Activated B cell treated with CpG ODN at 0.5 μM for 24 hours (primary cell): ENCODE measurements at regions of chr2 and their contacts with region 1.

Region 1: GRCh38 chr2:38115216-38116032 is 39.5 kb upstream of the CYP1B1 start:
- DNase-seq: peak; percentile 56
- ATAC-seq: peak; percentile 77
- H3K4me3 Mint-ChIP-seq: no peak overlapping the region
- H3K27ac Mint-ChIP-seq: no peak overlapping the region
- H3K4me1 Mint-ChIP-seq: peaks cover 3% of the 10 kb centered on the region
- H3K27me3 Mint-ChIP-seq: peaks cover 31% of the 10 kb centered on the region
- CTCF ChIP-seq: peak; percentile 69

Region 2: GRCh38 chr2:37397166-37397565 is 718.3 kb before region 1 on chr2:
- CTCF ChIA-PET with region 1: interaction called, 3 read pairs
- POLR2A ChIA-PET with region 1: no interaction called
- intact Hi-C with region 1: loop called (anchors 2 kb)
- DNase-seq: no peak
- ATAC-seq: no peak
- H3K4me3 Mint-ChIP-seq: no peak overlapping the region
- H3K27ac Mint-ChIP-seq: no peak overlapping the region
- H3K4me1 Mint-ChIP-seq: peaks cover 4% of the 10 kb centered on the region
- H3K27me3 Mint-ChIP-seq: no peaks in the 10 kb centered on the region
- CTCF ChIP-seq: no peak

Region 3: GRCh38 chr2:37925063-37925897 is 190.1 kb before region 1 on chr2 and contains the start of gene RMDN2:
- CTCF ChIA-PET with region 1: no interaction called
- POLR2A ChIA-PET with region 1: no interaction called
- intact Hi-C with region 1: loop called (anchors 1 kb)
- DNase-seq: peak; percentile 86
- ATAC-seq: peak; percentile 91
- H3K4me3 Mint-ChIP-seq: peak within 1 kb of the TSS; percentile 96
- H3K27ac Mint-ChIP-seq: peak within 1 kb of the TSS; percentile 93
- H3K4me1 Mint-ChIP-seq: peaks cover 28% of the 10 kb centered on the region
- H3K27me3 Mint-ChIP-seq: no peaks in the 10 kb centered on the region
- CTCF ChIP-seq: no peak
- total RNA-seq, gene RMDN2: 7.0 TPM in 2 replicates